ENCODE measurements at regions of chr4 and their contacts with region 1.

Region 1: DNA sequence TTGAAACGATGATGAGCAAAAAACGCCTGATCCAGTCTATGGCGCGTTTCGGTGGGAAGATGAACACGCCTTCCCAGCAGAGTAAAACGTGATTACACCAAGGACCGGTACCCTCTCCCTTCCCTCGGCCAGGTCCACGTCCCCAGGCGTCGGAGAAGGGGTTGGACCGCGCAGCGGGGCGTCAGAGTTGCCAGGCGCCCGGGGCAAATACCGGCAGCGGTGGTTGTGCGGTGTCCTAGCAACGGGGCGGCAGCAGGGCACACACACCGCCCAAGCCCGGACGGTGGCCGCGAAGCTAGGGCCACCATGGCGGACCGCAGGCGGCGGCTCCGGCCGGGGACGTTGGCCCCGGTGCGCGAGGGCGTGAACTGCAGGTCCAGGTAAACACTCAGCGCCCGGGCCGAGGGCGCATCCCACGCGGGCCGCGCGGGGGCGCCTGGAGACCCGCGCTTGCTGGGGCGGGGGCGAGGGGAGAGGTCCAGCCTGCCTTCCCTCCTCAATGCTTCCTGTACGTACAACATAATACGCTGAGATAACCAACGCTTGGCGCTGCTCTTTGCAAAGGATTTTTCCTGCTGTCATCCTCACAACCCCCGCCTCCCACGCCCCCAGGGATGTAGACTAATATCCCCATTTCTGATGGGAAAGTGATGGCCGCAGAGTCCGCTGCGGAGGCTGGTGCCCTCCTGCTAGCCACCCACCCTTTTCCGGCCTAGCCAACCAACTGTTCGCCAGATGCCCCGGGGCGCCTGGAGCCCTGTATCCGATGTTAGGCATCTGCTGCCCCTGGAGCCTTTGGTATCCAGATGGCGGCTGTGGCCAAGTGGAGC is at the start of gene FAM47E:
- DNase-seq: peak; percentile 73 to 85
- ATAC-seq: peak; percentile 89 to 92
- H3K4me3 ChIP-seq: peak within 1 kb of the TSS; percentile 63 to 84 (median 65)
- H3K27ac ChIP-seq: peak within 1 kb of the TSS; percentile 73 to 90 (median 78)
- H3K4me1 ChIP-seq: peaks cover 3 to 8% of the 10 kb centered on the region in 2 donors
- H3K27me3 ChIP-seq: no peaks in the 10 kb centered on the region
- CTCF ChIP-seq: peak; percentile 38 to 63 (median 53)
- POLR2A ChIP-seq: peak; percentile 14 to 52
- total RNA-seq, gene FAM47E: 0.56 to 6.8 (median 3.8) TPM

Region 2: DNA sequence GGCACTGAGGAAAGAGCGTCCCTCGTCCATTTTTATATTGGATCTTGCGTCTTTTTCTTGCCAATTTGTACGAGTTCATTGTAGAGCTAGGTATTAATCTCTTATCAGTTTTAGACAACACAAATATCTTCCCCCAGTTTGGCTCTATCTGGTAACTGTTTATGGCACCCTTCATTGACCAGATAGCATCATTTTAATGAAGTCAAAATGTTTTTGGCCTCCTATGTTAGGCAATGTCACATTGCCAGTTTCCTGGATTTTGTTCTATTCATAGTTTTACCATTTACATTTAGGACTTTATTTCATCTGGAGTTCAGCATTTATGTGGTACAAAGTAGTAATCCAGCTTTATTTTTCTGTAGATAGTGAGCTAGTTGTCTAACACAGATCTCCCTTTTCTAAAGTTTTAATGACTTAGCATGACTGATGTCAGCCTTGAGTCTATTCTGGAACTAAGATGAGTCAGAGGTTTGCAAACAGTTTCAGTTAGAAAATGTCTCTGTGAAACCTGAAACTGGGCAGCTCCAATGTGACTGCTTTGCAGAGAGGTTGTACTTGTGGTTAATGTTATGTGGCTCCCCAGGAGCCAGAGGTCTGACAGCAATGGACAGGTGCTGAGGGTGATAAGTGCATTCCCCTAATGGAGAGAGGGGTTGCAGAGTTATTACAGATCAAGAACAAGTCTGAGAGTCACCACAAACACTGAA is 49.6 kb after region 1 on chr4:
- in situ Hi-C with region 1: no loop called
- intact Hi-C with region 1: loop called (anchors 1 kb)
- DNase-seq: peak; percentile 77 to 88
- ATAC-seq: peak; percentile 92 to 95
- H3K4me3 ChIP-seq: no peak overlapping the region
- H3K27ac ChIP-seq: peak overlapping the region; percentile 84 to 97 (median 92)
- H3K4me1 ChIP-seq: peaks cover 39 to 49% of the 10 kb centered on the region in 2 donors
- H3K27me3 ChIP-seq: no peaks in the 10 kb centered on the region
- CTCF ChIP-seq: no peak
- POLR2A ChIP-seq: peak in 1 of 2 donors; percentile 34